ENCODE measurements at regions of chr21 and their contacts with region 1.

Region 1: GRCh38 chr21:15275615-15276200 is 210.9 kb upstream of the NRIP1 start:
- DNase-seq: peak; percentile 38
- ATAC-seq: no peak
- H3K4me3 ChIP-seq: no peak overlapping the region
- H3K27ac ChIP-seq: 0 out of 2 replicates have a peak overlapping the region, but pooled peaks have one; percentile 52
- H3K4me1 ChIP-seq: peaks cover 51% of the 10 kb centered on the region
- H3K27me3 ChIP-seq: no peaks in the 10 kb centered on the region
- CTCF ChIP-seq: no peak

Region 2: DNA sequence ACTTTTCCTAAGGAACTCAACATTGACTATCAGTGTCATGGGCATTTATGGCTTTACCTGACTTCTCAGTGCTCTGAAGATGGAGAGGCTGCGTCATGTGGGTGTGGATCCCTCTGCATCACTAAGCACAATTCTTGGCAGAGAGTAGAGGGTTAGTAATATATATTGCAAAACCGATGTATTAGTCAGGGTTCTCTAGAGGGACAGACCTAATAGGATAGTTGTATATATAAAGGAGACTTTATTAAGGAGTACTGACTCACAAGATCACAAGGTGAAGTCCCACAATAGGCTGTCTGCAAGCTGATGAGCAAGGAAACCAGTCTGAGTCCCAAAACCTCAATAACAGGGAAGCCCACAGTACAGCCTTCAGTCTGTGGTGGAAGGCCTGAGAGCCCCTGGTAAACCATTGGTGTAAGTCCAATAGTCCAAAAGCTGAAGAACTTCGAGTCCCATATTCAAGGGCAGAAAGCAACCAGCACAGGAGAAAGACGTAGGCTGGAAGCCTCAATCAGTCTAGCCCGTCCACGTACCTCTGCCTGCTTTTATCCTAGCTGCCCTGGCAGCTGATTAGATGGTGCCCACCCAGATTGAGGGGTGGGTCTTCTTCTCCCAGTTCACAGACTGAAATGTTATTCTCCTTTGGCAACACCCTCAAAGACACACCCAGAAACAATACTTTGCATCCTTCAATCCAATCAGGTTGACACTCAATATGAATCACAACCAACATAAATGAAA is 51.2 kb before region 1 on chr21:
- CTCF ChIA-PET with region 1: no interaction called
- POLR2A ChIA-PET with region 1: no interaction called
- intact Hi-C with region 1: loop called (anchors 2 kb)
- DNase-seq: peak; percentile 99
- ATAC-seq: peak; percentile 97
- H3K4me3 ChIP-seq: no peak overlapping the region
- H3K27ac ChIP-seq: peak overlapping the region; percentile 93
- H3K4me1 ChIP-seq: peaks cover 42% of the 10 kb centered on the region
- H3K27me3 ChIP-seq: no peaks in the 10 kb centered on the region
- CTCF ChIP-seq: no peak

Region 3: DNA sequence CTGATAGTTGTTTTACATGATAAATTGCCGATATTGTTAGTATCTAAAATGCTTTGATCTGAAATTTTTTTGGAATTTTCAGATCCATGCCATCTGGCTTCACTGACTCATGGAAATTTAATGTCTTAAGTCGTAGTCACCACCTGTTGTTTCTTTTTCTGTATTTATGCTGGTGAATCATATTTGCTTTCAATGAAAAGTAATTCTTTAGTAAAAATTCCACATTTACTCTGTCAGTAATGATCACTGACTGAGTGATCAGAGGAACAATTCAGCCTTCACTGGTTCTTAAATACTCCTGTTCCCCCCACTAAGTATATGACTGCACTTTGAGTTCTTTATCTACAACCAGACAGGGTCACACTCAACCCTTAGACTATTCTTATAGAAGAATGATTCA is 25.3 kb before region 1 on chr21:
- CTCF ChIA-PET with region 1: no interaction called
- POLR2A ChIA-PET with region 1: no interaction called
- intact Hi-C with region 1: no loop called
- DNase-seq: peak; percentile 92
- ATAC-seq: peak; percentile 82
- H3K4me3 ChIP-seq: no peak overlapping the region
- H3K27ac ChIP-seq: peak overlapping the region; percentile 78
- H3K4me1 ChIP-seq: peaks cover 52% of the 10 kb centered on the region
- H3K27me3 ChIP-seq: no peaks in the 10 kb centered on the region
- CTCF ChIP-seq: no peak

Measured in PC-3 (cell line).